Gastrocnemius medialis (tissue), 4 donors: ENCODE measurements at regions of chr1 and their contacts with region 1.

Region 1: DNA sequence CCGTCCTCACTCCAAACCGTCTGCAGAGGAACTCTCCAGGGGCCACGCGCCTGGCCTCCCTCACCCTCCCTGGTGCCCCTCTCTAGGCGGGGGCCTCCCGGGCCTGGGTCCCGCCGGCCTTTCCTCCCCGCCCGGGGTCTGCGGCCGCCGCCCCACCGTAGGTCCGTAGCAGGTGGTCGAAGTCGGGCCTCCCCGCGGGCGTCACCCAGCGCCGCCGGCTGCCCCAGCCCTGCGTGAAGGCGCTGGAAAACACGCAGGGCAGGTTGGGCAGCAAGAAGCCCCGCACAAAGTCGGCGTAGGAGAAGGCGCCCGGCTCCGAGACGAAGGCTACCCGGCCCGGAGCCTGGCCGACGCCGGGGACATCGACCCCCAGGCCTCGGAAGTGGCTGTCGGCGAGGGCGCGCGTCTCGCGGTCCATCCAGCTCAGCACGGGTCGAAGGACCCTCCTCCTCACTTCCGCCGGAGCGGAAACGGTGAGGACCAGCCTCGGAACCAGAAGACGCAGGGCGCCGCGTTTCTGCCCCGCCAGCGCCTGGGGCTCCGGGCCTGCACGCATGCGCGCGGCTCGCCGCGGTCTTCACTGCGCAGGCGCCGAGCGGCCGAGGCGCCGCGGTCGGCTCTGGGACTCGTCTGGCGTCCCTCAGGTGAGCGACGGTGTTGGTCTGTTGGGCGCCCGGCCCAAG is at the starts of genes JMJD4 and SNAP47:
- DNase-seq: peak; percentile 86 to 88
- ATAC-seq: peak; percentile 95
- H3K4me3 ChIP-seq: peak within 1 kb of the TSS; percentile 88 to 99 (median 98)
- H3K27ac ChIP-seq: peak within 1 kb of the TSS; percentile 90 to 97 (median 94)
- H3K4me1 ChIP-seq: peaks cover 23 to 24% of the 10 kb centered on the region in 2 donors
- H3K27me3 ChIP-seq: no peaks in the 10 kb centered on the region
- CTCF ChIP-seq: no peak
- POLR2A ChIP-seq: peak; percentile 92 to 93
- total RNA-seq, gene JMJD4: 9.2 to 21.6 (median 19.9) TPM
- total RNA-seq, gene SNAP47: 30.2 to 42.7 (median 37.9) TPM

Region 2: GRCh38 chr1:227563324-227564201 is 171.4 kb before region 1 on chr1 and contains the start of gene ZNF678:
- in situ Hi-C with region 1: no loop called
- intact Hi-C with region 1: loop called (anchors 5 kb)
- DNase-seq: peak; percentile 85 to 92
- ATAC-seq: peak; percentile 99
- H3K4me3 ChIP-seq: peak within 1 kb of the TSS; percentile 77 to 87 (median 83)
- H3K27ac ChIP-seq: peak within 1 kb of the TSS; percentile 78 to 85 (median 83)
- H3K4me1 ChIP-seq: peaks cover 8 to 11% of the 10 kb centered on the region in 2 donors
- H3K27me3 ChIP-seq: peaks cover 0 to 9% (median 4%) of the 10 kb centered on the region in 3 donors
- CTCF ChIP-seq: no peak
- POLR2A ChIP-seq: peak in 1 of 2 donors; percentile 35
- total RNA-seq, gene ZNF678: 2.3 to 7.3 (median 4.9) TPM

Region 3: DNA sequence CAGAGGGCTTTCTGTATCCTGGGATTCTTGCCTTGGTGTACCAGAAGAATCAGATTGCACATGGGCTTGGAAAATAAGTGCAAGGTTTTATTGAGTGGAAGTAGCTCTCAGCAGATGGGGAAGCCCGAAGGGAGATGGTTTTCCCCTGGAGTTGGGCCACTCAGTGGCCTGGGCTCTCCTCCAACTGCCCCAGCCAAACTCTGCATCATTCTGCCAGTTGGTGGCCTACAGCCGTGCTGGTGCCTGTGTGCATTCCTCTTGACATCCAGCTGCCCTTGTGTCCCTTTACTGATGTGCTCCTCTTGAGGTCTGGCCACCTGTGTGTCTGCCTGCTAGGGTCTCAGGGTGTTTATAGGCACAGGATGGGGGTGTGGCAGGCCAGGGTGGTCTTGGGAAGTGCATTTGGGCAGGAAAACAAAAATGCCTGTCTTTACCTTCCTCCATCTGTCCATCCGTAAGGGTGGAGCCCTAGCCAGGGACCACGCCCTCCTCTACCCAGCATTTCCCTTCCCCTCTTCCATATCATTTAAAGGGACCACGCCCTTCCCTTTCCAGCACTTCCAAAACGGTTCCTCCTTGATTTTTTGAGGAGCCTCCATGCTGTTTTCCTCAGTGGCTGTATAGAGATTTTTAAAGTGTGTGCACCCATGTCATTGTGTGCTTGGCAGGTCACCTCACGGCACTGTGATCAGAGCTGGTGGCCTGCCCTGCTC is 19.2 kb after region 1 on chr1:
- in situ Hi-C with region 1: no loop called
- intact Hi-C with region 1: loop called (anchors 1 kb)
- DNase-seq: peak; percentile 69 to 90
- ATAC-seq: peak; percentile 82 to 85
- H3K4me3 ChIP-seq: no peak overlapping the region
- H3K27ac ChIP-seq: peak overlapping the region; percentile 45 to 90 (median 84)
- H3K4me1 ChIP-seq: peaks cover 68 to 75% of the 10 kb centered on the region in 2 donors
- H3K27me3 ChIP-seq: no peaks in the 10 kb centered on the region
- CTCF ChIP-seq: no peak
- POLR2A ChIP-seq: no peak